IMR-90 (cell line): ENCODE measurements at regions of chrX and their contacts with region 1.

Region 1: GRCh38 chrX:45735571-45735970 is 534.9 kb upstream of the DIPK2B start:
- DNase-seq: no peak
- ATAC-seq: no peak
- H3K4me3 ChIP-seq: no peak overlapping the region
- H3K27ac ChIP-seq: no peak overlapping the region
- H3K4me1 ChIP-seq: no peaks in the 10 kb centered on the region
- H3K27me3 ChIP-seq: no peaks in the 10 kb centered on the region
- CTCF ChIP-seq: no peak
- POLR2A ChIP-seq: no peak
- RAD21 ChIP-seq: no peak

Region 2: GRCh38 chrX:45344594-45344993 is 391.0 kb before region 1 on chrX:
- CTCF ChIA-PET with region 1: no interaction called
- POLR2A ChIA-PET with region 1: no interaction called
- dilution Hi-C with region 1: no loop called
- in situ Hi-C with region 1: loop called (anchors 10 kb)
- intact Hi-C with region 1: no loop called
- DNase-seq: peak; percentile 81
- ATAC-seq: peak; percentile 37; the same call in 1 of the 2 replicates
- H3K4me3 ChIP-seq: no peak overlapping the region
- H3K27ac ChIP-seq: no peak overlapping the region
- H3K4me1 ChIP-seq: peaks cover 2% of the 10 kb centered on the region
- H3K27me3 ChIP-seq: no peaks in the 10 kb centered on the region
- CTCF ChIP-seq: no peak
- POLR2A ChIP-seq: no peak
- RAD21 ChIP-seq: no peak

Region 3: GRCh38 chrX:45699158-45699557 is 36.4 kb before region 1 on chrX:
- CTCF ChIA-PET with region 1: no interaction called
- POLR2A ChIA-PET with region 1: no interaction called
- dilution Hi-C with region 1: no loop called
- in situ Hi-C with region 1: no loop called
- intact Hi-C with region 1: no loop called
- DNase-seq: peak; percentile 62
- ATAC-seq: no peak
- H3K4me3 ChIP-seq: no peak overlapping the region
- H3K27ac ChIP-seq: peak overlapping the region; percentile 45; the same call in 1 of the 2 replicates
- H3K4me1 ChIP-seq: no peaks in the 10 kb centered on the region
- H3K27me3 ChIP-seq: no peaks in the 10 kb centered on the region
- CTCF ChIP-seq: no peak
- POLR2A ChIP-seq: no peak
- RAD21 ChIP-seq: no peak